Mammary epithelial cell (primary cell): ENCODE measurements at regions of chr6 and their contacts with region 1.

Region 1: GRCh38 chr6:28496099-28496779 is 19.4 kb downstream of the GPX6 start:
- DNase-seq: no peak
- H3K4me3 ChIP-seq: no peak overlapping the region
- H3K27ac ChIP-seq: no peak overlapping the region
- H3K4me1 ChIP-seq: no peaks in the 10 kb centered on the region
- H3K27me3 ChIP-seq: no peaks in the 10 kb centered on the region
- CTCF ChIP-seq: peak; percentile 17 to 32

Region 2: DNA sequence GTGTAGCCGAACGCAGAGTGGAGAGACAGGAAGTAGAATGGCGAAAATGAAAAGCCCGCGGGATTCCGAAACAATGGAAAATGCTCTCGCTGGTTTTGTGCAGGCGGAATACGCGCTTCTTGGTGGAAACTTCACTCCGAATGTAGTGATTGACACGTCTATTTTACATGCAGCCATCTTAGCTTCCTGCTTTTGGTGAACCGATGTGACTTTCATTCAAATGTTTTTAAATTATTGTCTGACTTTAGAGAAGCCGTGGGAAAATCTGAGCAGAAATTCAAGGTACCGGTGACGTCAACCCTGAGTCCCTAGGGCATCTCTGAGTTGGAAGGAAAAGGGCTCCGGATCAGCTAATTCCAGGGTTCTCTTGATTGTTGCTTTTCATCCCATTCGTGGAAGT is 40.8 kb after region 1 on chr6:
- CTCF ChIA-PET with region 1: no interaction called
- dilution Hi-C with region 1: no loop called
- in situ Hi-C with region 1: no loop called
- intact Hi-C with region 1: no loop called
- DNase-seq: no peak
- H3K4me3 ChIP-seq: peak overlapping the region in 1 of 3 experiments; percentile 24
- H3K27ac ChIP-seq: no peak overlapping the region
- H3K4me1 ChIP-seq: peaks cover under 1% of the 10 kb centered on the region
- H3K27me3 ChIP-seq: no peaks in the 10 kb centered on the region
- CTCF ChIP-seq: no peak

Region 3: GRCh38 chr6:28580475-28580874 is 84.2 kb after region 1 on chr6:
- CTCF ChIA-PET with region 1: interaction called, 10 read pairs
- dilution Hi-C with region 1: no loop called
- in situ Hi-C with region 1: no loop called
- intact Hi-C with region 1: loop called (anchors 1 kb)
- DNase-seq: peak; percentile 4
- H3K4me3 ChIP-seq: no peak overlapping the region
- H3K27ac ChIP-seq: no peak overlapping the region
- H3K4me1 ChIP-seq: peaks cover 4% of the 10 kb centered on the region
- H3K27me3 ChIP-seq: no peaks in the 10 kb centered on the region
- CTCF ChIP-seq: peak; percentile 7 to 26

Region 4: GRCh38 chr6:29171736-29172135 is 675.5 kb after region 1 on chr6:
- CTCF ChIA-PET with region 1: no interaction called
- dilution Hi-C with region 1: no loop called
- in situ Hi-C with region 1: no loop called
- intact Hi-C with region 1: no loop called
- DNase-seq: no peak
- H3K4me3 ChIP-seq: no peak overlapping the region
- H3K27ac ChIP-seq: no peak overlapping the region
- H3K4me1 ChIP-seq: no peaks in the 10 kb centered on the region
- H3K27me3 ChIP-seq: no peaks in the 10 kb centered on the region
- CTCF ChIP-seq: no peak